Activated T-helper 2 cell treated with anti-CD3 and anti-CD28 coated beads, Interferon-gamma antibody, Interleukin-2, Interleukin-4, amounts not matched to agents 10 μg/mL and 5 μg/mL and 100 μg/mL, durations not matched to agents 14 hours and 24 hours and 36 hours (primary cell): ENCODE measurements at regions of chr2 and their contacts with region 1.

Region 1: GRCh38 chr2:217510771-217511291 is 492.0 kb downstream of the TNS1 start:
- DNase-seq: peak; percentile 16
- H3K4me3 Mint-ChIP-seq: no peak overlapping the region
- H3K27ac Mint-ChIP-seq: no peak overlapping the region
- H3K4me1 Mint-ChIP-seq: peaks cover 6% of the 10 kb centered on the region
- H3K27me3 Mint-ChIP-seq: peaks cover 6% of the 10 kb centered on the region

Region 2: GRCh38 chr2:216683846-216684507 is 826.9 kb before region 1 on chr2:
- intact Hi-C with region 1: loop called (anchors 2 kb)
- DNase-seq: no peak
- H3K4me3 Mint-ChIP-seq: no peak overlapping the region
- H3K27ac Mint-ChIP-seq: no peak overlapping the region
- H3K4me1 Mint-ChIP-seq: peaks cover 10% of the 10 kb centered on the region
- H3K27me3 Mint-ChIP-seq: peaks cover 15% of the 10 kb centered on the region

Region 3: DNA sequence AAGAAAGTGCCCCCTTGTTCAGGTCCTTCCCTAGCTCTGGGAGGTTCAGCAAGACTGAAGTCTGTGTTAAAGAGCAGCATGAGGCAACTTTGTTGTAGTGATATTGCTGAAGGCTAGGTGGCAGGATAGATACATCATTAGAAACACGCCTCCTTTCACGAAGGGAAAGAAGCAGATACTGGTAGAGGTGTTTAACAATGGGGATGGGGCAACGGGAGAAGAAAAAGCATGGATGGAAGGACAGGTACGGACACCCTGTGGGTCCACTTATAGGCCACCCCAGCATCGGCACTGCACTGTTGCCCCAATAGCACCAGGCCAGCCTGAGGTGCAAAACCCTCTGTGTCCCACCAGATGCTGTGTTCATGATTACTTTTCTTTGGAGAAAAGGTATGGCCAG is 811.9 kb before region 1 on chr2:
- intact Hi-C with region 1: loop called (anchors 1 kb)
- DNase-seq: no peak
- H3K4me3 Mint-ChIP-seq: no peak overlapping the region
- H3K27ac Mint-ChIP-seq: no peak overlapping the region
- H3K4me1 Mint-ChIP-seq: peaks cover 5% of the 10 kb centered on the region
- H3K27me3 Mint-ChIP-seq: peaks cover 36% of the 10 kb centered on the region

Region 4: DNA sequence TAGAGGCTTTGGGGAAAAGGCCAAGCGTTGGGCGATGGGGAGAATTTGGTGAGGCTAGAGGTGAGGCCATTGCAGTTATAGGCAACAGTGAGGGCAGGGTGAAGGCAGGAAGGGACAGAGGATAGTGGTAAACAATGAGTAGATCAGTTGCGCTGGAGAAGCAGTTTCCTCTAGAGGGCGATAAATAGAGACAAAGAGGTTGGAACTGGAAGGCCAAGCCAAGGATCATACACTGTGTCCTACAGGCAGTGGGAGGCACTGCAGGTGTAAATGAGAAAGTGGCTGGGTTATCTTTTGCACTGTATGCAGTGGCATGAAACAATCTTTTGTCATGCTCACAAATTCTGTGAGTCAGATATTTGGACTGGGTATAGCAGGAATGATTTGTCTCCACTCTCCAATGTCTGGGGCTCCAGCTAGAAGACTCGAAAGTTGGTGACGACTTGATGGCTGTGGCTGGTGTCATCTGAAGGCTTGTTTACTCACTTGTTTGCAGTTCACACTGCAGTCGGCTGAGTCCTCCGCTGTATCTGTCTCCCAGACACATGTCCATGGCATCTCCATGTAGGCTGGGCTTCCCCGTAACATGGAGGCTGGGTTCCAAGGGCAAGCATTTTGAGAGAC is 733.1 kb before region 1 on chr2:
- intact Hi-C with region 1: loop called (anchors 5 kb)
- DNase-seq: peak; percentile 34
- H3K4me3 Mint-ChIP-seq: no peak overlapping the region
- H3K27ac Mint-ChIP-seq: no peak overlapping the region
- H3K4me1 Mint-ChIP-seq: peaks cover 2% of the 10 kb centered on the region
- H3K27me3 Mint-ChIP-seq: peaks cover 9% of the 10 kb centered on the region

Region 5: DNA sequence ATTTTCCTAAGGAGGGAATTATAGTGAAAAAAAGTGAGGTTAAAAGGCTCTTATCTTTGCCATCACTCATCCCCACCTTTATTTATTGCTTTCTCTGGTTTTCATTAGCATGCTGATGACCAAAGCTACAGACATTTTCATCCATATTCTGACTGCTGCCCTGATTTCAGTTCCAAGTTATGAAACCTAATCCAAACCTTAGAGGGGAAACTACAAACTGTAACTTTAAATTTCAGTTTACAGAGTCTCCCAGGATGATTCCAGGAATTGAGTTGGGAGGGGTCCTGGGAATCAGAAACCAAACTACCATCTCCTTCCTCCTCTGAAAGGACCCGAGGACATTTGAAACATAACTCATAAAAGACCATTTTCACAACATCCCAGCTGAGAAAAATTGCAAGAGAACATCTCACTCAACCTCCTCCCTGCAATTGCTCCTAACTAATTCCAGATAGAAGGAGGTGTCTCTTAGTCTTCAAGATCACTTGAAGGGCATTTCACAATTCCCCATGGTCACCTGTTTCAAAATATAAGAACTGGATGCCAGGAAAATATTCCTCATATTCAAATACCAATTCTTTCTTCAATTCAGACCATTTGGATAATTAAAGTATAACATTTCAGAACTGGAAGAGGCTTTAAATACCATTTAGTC is 28.6 kb before region 1 on chr2:
- intact Hi-C with region 1: no loop called
- DNase-seq: no peak
- H3K4me3 Mint-ChIP-seq: no peak overlapping the region
- H3K27ac Mint-ChIP-seq: no peak overlapping the region
- H3K4me1 Mint-ChIP-seq: no peaks in the 10 kb centered on the region
- H3K27me3 Mint-ChIP-seq: peaks cover 5% of the 10 kb centered on the region

Region 6: DNA sequence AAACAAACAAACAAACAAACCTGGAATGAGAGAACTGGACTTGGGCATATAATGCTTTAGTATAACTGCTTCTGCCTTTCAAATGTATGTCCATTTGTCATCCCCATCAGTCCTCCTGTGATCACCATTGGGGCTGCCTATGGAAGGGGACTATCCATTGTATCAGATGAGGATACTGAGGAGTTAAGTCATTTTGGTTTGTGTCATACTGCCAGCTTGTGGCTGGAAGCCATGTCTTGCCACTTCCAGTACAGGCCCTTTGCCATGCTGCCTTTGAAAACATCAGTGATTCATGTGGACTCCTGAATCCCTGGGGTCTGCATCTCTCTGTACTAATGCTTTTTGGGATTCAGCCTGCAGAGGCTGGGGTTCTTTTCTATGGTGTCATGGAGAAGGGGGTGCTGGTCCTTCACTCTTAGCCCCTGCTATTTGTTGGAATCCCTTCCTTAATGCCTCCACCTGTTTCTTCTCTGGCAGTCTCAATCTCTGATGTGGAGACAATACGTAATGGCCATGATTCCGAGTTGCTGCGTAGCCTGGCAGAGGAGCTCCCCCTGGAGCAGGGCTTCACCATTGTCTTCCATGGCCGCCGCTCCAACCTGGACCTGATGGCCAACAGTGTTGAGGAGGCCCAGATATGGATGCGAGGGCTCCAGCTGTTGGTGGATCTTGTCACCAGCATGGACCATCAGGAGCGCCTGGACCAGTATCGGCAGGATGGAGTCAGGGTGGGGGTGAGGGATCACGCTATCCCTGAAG is 1107.5 kb after region 1 on chr2:
- intact Hi-C with region 1: no loop called
- DNase-seq: no peak
- H3K4me3 Mint-ChIP-seq: no peak overlapping the region
- H3K27ac Mint-ChIP-seq: no peak overlapping the region
- H3K4me1 Mint-ChIP-seq: no peaks in the 10 kb centered on the region
- H3K27me3 Mint-ChIP-seq: no peaks in the 10 kb centered on the region